ENCODE measurements at regions of chr3 and their contacts with region 1.

Region 1: DNA sequence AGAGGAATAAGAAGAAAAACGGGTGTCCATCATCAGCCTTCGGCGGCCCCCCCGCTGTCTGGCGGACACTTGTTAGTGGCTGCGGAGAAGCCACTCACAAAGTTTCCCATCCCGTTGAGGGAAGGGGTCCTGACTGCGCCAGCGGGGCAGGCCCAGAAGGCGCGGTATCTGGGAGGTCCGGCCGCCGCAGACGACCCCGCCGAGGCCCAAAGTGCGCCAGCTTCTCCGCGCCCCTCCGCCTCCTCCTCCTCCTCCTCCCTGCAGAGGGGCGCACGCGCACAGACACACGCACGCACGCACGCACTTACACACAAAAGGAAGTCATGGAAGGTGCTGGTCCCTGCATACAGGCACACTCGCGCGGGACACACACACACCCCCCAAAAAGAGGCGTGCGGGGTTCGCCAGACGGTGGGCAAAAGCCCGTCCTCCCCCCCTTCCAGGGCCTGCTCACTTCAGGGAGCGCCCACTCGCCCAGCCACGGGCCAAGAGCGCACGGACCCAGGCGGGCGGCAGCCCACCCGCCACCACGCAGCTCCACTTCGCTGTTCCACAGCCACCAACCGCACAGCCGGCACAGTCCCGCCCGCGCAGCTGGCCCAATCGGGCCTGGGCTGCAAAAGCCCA is 18.0 kb downstream of the ZNF148 start:
- DNase-seq: peak in 1 of 2 experiments; percentile 55
- H3K4me3 ChIP-seq: peak overlapping the region; percentile 47 to 69 (median 62)
- H3K27ac ChIP-seq: no peak overlapping the region; the same call in 1 of the 2 replicates
- H3K4me1 ChIP-seq: no peaks in the 10 kb centered on the region
- H3K27me3 ChIP-seq: no peaks in the 10 kb centered on the region
- CTCF ChIP-seq: no peak
- EP300 ChIP-seq: no peak
- POLR2A ChIP-seq: peak; percentile 36 to 58; a peak in 2 of 3 replicates
- RAD21 ChIP-seq: no peak

Region 2: DNA sequence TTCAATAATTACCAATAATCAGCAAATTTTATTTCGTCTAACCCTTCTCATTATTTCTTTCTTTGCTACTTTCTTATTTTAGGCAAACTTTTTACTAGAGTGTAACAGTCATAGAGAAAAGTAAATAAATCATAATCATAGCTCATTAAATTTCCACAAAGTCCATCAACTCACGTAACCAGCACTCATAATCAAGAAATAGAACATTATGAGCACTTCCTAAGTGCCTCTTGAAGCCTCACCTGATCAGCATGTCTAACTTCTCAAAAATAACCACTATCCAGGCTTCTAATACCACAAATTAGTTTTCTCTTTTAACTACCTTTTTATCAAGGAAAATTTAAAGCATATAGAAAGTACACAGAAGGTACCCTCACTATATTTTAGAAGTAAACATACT is 106.2 kb before region 1 on chr3:
- CTCF ChIA-PET with region 1: no interaction called
- POLR2A ChIA-PET with region 1: no interaction called
- DNase-seq: no peak
- H3K4me3 ChIP-seq: no peak overlapping the region
- H3K27ac ChIP-seq: no peak overlapping the region
- H3K4me1 ChIP-seq: no peaks in the 10 kb centered on the region
- H3K27me3 ChIP-seq: no peaks in the 10 kb centered on the region
- CTCF ChIP-seq: no peak
- EP300 ChIP-seq: no peak
- POLR2A ChIP-seq: no peak
- RAD21 ChIP-seq: no peak

Region 3: DNA sequence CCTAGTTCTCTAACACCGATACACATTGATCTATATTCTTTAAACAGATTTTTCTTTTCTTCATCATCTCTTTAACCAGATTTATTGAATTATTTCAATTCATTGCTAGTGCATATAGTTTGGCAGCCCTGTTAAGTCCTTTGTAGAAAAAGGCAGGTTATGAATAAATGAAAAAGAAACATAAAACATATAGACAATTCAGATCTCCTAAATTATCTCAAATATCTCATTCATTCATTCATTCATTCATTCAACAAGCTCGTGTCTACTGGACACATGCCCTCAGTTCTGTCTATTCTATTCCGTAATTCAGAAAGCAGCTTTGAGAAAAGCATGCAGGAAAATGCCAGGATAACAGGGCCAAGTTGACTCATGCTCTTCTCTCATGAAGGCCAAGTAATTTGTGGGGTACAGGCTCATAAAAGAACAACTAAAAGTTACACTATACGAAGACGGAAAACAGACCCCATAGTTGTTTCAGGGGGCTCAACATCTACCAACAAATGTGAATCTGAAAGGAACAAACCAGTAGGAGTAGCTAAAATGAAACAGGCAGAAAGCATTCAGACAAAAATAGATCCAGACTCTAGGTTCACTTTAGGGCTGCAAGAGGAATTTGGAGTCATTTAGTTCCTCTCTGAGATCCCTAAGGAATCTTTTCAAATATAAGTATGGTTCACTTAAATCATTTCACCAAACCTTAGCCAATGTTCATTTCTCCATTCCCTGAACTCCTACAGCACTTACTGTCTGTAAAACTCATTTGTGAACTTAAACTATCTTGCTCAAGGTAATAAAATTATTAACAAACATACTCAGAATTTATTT is 10.5 kb after region 1 on chr3:
- CTCF ChIA-PET with region 1: interaction called, 4 read pairs
- POLR2A ChIA-PET with region 1: interaction called, 15 read pairs
- DNase-seq: no peak
- H3K4me3 ChIP-seq: no peak overlapping the region
- H3K27ac ChIP-seq: no peak overlapping the region
- H3K4me1 ChIP-seq: no peaks in the 10 kb centered on the region
- H3K27me3 ChIP-seq: no peaks in the 10 kb centered on the region
- CTCF ChIP-seq: no peak
- EP300 ChIP-seq: no peak
- POLR2A ChIP-seq: no peak
- RAD21 ChIP-seq: no peak

Region 4: GRCh38 chr3:125374996-125375941 is 18.1 kb after region 1 on chr3 and contains the start of gene ZNF148:
- CTCF ChIA-PET with region 1: interaction called, 4 read pairs
- POLR2A ChIA-PET with region 1: interaction called, 13 read pairs
- DNase-seq: peak; percentile 62 to 94
- H3K4me3 ChIP-seq: peak within 1 kb of the TSS; percentile 74 to 100 (median 92)
- H3K27ac ChIP-seq: peak within 1 kb of the TSS; percentile 69; the same call in 1 of the 2 replicates
- H3K4me1 ChIP-seq: peaks cover 0 to 6% (median 1%) of the 10 kb centered on the region in 4 experiments; a peak in 3 of 7 replicates
- H3K27me3 ChIP-seq: no peaks in the 10 kb centered on the region
- CTCF ChIP-seq: no peak
- EP300 ChIP-seq: 0 out of 3 replicates have a peak, but pooled peaks of 1 of the 2 experiments have one; percentile 31
- POLR2A ChIP-seq: peak in 1 of 2 experiments; percentile 89; a peak in 2 of 3 replicates
- RAD21 ChIP-seq: no peak
- total RNA-seq, gene ZNF148: 17.6 and 22.6 TPM in 2 replicates

Region 5: GRCh38 chr3:125403789-125404188 is 46.6 kb after region 1 on chr3:
- CTCF ChIA-PET with region 1: no interaction called
- POLR2A ChIA-PET with region 1: no interaction called
- DNase-seq: no peak
- H3K4me3 ChIP-seq: no peak overlapping the region
- H3K27ac ChIP-seq: no peak overlapping the region
- H3K4me1 ChIP-seq: no peaks in the 10 kb centered on the region
- H3K27me3 ChIP-seq: no peaks in the 10 kb centered on the region
- CTCF ChIP-seq: peak; percentile 4 to 42 (median 12); a peak in 3 of 4 replicates
- EP300 ChIP-seq: no peak
- POLR2A ChIP-seq: no peak
- RAD21 ChIP-seq: peak; percentile 24 to 37